ENCODE measurements at regions of chr14 and their contacts with region 1.

Region 1: DNA sequence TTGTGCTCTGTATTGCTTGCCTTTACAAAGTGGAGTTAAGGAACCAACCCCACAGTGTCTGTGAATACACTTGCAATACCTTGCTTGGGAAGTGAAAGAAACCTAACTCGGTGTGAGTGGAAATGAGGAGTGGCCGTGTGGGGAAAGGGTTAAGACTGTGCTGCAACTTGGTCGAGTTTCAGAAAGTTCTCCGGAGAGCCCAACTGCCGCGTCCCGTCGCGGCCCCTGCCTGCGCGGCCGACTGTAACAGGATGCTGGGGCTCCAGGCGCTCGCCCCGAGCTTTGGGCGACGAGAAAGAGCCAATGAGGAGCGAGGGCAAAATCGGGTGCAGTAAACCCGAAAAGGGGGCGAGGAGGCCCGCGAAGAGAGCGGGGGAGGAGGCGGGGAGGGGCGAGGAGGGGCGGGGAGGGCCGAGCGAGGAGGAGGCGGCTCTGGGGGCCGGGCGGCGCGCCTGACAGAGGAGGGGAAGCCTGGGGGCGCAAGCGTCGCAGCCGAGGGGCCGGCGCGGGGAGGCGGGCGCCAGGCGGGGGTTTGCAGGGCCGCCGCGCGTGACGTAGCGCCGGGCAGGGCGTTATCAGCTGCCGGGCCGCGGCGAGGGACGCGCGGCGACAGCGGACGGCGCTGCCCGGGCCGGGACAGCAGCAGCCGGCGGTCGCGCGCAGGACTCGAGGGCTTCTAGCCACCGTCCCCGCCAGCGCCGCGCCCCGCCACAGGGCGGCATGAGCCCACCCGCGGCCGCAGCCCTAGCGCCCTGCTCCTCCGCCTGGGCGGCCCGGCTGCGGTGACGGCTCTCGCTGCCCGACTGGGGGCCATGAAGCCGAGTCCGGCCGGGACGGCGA is at the start of gene DACT1:
- DNase-seq: peak; percentile 50
- H3K4me3 ChIP-seq: peak within 1 kb of the TSS; percentile 60 to 87 (median 76)
- H3K27ac ChIP-seq: peak within 1 kb of the TSS; percentile 85 to 93 (median 90)
- H3K4me1 ChIP-seq: peaks cover 6 to 36% (median 18%) of the 10 kb centered on the region in 4 donors
- H3K27me3 ChIP-seq: peaks cover 11% of the 10 kb centered on the region
- CTCF ChIP-seq: no peak
- EP300 ChIP-seq: no peak
- POLR2A ChIP-seq: no peak
- total RNA-seq, gene DACT1: 2.3 to 5.8 (median 3.3) TPM

Region 2: GRCh38 chr14:56703947-56704346 is 1933.7 kb before region 1 on chr14:
- in situ Hi-C with region 1: no loop called
- intact Hi-C with region 1: no loop called
- DNase-seq: no peak
- H3K4me3 ChIP-seq: no peak overlapping the region
- H3K27ac ChIP-seq: no peak overlapping the region
- H3K4me1 ChIP-seq: no peaks in the 10 kb centered on the region
- H3K27me3 ChIP-seq: no peaks in the 10 kb centered on the region
- CTCF ChIP-seq: no peak
- EP300 ChIP-seq: no peak
- POLR2A ChIP-seq: no peak

Region 3: GRCh38 chr14:58395812-58396788 is 241.5 kb before region 1 on chr14 and contains the start of gene TOMM20L:
- in situ Hi-C with region 1: no loop called
- intact Hi-C with region 1: no loop called
- DNase-seq: peak; percentile 80
- H3K4me3 ChIP-seq: peak within 1 kb of the TSS; percentile 30 to 70 (median 59)
- H3K27ac ChIP-seq: peak within 1 kb of the TSS; percentile 80 to 88 (median 86)
- H3K4me1 ChIP-seq: peaks cover 0 to 15% (median 4%) of the 10 kb centered on the region in 4 donors
- H3K27me3 ChIP-seq: no peaks in the 10 kb centered on the region
- CTCF ChIP-seq: peak in 4 of 5 experiments; percentile 66 to 89 (median 84)
- EP300 ChIP-seq: no peak
- POLR2A ChIP-seq: peak; percentile 47
- total RNA-seq, gene TOMM20L: not detected

Region 4: DNA sequence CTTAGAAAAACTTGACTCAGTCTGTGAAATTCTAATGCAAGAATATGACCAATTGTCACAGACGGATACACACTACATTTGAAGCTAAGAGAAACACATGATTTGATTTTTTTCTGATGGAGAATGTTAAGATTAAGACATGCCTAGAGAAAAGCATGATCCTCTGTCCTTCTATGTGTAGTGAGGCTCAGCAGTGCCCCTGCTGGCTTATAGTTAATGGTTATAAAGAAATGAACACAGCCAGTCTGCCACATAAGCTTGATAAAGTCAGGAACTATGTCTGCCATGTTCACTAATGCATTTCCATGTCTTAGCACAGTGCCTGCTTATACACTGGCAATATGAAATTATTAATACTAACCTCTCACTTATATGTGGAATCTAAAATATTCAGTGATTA is 382.8 kb after region 1 on chr14:
- in situ Hi-C with region 1: loop called in 3 of 4 experiments (anchors 25 kb)
- intact Hi-C with region 1: loop called (anchors 10 kb)
- DNase-seq: no peak
- H3K4me3 ChIP-seq: no peak overlapping the region
- H3K27ac ChIP-seq: no peak overlapping the region
- H3K4me1 ChIP-seq: no peaks in the 10 kb centered on the region
- H3K27me3 ChIP-seq: no peaks in the 10 kb centered on the region
- CTCF ChIP-seq: peak; percentile 11 to 40 (median 25)
- EP300 ChIP-seq: no peak
- POLR2A ChIP-seq: no peak

Region 5: GRCh38 chr14:59028476-59029202 is 391.0 kb after region 1 on chr14:
- in situ Hi-C with region 1: loop called in 3 of 4 experiments (anchors 25 kb)
- intact Hi-C with region 1: loop called (anchors 10 kb)
- DNase-seq: peak; percentile 64
- H3K4me3 ChIP-seq: no peak overlapping the region
- H3K27ac ChIP-seq: no peak overlapping the region
- H3K4me1 ChIP-seq: peaks cover 0 to 3% (median 0%) of the 10 kb centered on the region in 4 donors
- H3K27me3 ChIP-seq: no peaks in the 10 kb centered on the region
- CTCF ChIP-seq: peak; percentile 58 to 78 (median 75)
- EP300 ChIP-seq: no peak
- POLR2A ChIP-seq: no peak

Measured in transverse colon (tissue), 4 donors.